Activated CD4-positive, alpha-beta T cell treated with anti-CD3 and anti-CD28 coated beads for 36 hours (primary cell): ENCODE measurements at regions of chr19 and their contacts with region 1.

Region 1: DNA sequence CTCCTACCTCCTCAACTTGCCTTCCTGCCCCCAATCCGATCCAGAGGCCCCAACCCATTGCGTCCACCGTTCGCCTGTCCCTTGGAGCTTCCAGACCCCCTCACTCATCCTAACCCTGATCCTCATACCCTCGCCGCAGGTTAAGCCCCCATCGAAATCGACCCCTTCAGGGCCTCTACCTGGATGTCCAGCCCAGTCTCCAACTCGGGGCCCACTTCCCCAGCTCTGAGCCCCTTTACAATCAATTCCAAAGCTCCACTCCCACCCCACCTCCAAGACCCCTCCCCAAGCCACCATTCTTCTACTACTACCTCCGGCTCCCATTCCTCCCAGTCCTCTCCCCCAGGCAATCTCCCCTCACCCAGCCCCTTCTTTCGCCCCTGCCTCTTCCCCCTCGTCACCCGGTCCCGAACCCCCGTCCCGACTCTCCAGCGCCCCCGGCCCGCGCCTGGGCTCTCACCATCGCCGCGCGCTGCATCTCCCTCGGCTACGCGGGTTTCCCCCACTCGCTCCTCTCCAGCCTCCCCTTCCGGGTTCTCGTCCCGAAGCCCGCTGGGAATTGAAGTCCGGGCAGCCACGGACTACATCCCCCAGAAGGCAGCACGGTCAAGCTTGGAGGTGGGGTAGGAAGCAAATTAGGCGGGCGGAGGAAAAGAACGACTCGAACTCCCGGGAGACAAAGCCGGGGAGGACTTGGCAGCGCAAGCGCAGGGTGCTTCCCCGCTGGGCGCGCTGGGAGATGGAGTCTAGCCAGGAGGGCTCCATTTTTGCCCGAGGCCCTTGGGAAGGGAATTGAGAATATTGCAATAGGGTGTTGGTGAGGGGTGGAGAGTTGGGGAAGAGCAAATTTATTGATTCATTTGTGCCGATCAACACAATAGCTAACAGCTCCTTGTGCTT is at the start of gene FBXO46:
- DNase-seq: peak; percentile 97
- ATAC-seq: peak; percentile 99
- H3K4me3 Mint-ChIP-seq: peak within 1 kb of the TSS; percentile 88
- H3K27ac Mint-ChIP-seq: peak within 1 kb of the TSS; percentile 90
- H3K4me1 Mint-ChIP-seq: peaks cover 35% of the 10 kb centered on the region
- H3K27me3 Mint-ChIP-seq: no peaks in the 10 kb centered on the region
- total RNA-seq, gene FBXO46: 32.3 to 43.3 TPM

Region 2: GRCh38 chr19:45506246-45506990 is 224.2 kb before region 1 on chr19:
- CTCF ChIA-PET with region 1: no interaction called
- POLR2A ChIA-PET with region 1: no interaction called
- intact Hi-C with region 1: no loop called
- DNase-seq: peak; percentile 100
- ATAC-seq: peak; percentile 80
- H3K4me3 Mint-ChIP-seq: peak overlapping the region; percentile 85
- H3K27ac Mint-ChIP-seq: peak overlapping the region; percentile 96
- H3K4me1 Mint-ChIP-seq: peaks cover 38% of the 10 kb centered on the region
- H3K27me3 Mint-ChIP-seq: no peaks in the 10 kb centered on the region

Region 3: GRCh38 chr19:45717166-45717982 is 13.3 kb before region 1 on chr19:
- CTCF ChIA-PET with region 1: interaction called, 24 read pairs
- POLR2A ChIA-PET with region 1: interaction called, 6 read pairs
- intact Hi-C with region 1: loop called (anchors 1 kb)
- DNase-seq: peak; percentile 99
- ATAC-seq: peak; percentile 97
- H3K4me3 Mint-ChIP-seq: peak overlapping the region; percentile 93
- H3K27ac Mint-ChIP-seq: peak overlapping the region; percentile 94
- H3K4me1 Mint-ChIP-seq: peaks cover 40% of the 10 kb centered on the region
- H3K27me3 Mint-ChIP-seq: no peaks in the 10 kb centered on the region

Region 4: DNA sequence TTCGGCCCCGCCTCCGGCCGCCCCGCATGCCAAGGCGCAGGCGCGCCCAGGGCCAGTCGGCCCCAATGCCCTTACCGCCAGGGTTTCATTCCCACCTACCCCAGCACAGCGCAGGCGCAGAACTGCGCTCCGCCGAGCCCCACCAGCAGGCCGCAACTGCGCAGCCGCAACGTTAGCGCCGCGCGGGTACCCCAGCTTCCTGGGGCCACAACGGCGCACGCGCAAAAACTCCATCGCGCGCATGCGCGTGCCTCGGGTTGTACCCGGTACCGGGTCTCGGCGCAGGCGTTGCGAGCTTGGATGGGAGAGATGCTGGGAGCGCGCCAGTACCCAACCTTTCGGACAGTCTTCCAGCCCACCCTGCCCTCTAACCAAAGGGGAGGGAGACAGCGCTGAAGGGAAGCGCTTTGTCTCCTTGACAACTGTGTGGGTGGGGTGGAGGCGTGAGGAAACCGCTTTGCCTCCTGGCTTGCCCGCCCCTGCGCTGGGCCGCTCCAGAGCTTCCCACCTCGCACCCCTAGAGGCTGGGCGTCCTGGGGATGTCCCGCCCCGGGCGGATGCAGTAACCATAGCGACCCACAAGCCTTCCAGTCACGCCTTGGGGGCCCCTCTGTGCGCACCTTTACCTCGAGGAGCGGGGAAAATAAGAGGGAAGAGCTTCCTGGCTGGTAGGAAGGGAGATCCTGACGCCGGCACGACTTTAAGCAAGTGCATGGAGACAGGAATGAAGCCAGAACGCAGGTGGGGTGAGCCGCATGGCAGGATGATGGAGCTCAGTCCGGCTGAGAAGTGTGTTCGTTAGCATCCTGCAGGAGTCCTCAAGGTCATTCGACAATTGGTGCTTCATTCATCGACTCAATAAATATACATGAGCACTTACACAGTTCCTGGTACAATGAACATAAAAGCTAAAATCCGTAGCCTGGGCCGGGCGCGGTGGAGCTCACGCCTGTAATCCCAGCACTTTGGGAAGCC is 172.3 kb after region 1 on chr19:
- CTCF ChIA-PET with region 1: no interaction called
- POLR2A ChIA-PET with region 1: no interaction called
- intact Hi-C with region 1: loop called in 1 of 2 experiments (anchors 2 kb)
- DNase-seq: peak; percentile 100
- ATAC-seq: peak; percentile 88
- H3K4me3 Mint-ChIP-seq: peak overlapping the region; percentile 88
- H3K27ac Mint-ChIP-seq: peak overlapping the region; percentile 75
- H3K4me1 Mint-ChIP-seq: peaks cover 16% of the 10 kb centered on the region
- H3K27me3 Mint-ChIP-seq: no peaks in the 10 kb centered on the region

Region 5: DNA sequence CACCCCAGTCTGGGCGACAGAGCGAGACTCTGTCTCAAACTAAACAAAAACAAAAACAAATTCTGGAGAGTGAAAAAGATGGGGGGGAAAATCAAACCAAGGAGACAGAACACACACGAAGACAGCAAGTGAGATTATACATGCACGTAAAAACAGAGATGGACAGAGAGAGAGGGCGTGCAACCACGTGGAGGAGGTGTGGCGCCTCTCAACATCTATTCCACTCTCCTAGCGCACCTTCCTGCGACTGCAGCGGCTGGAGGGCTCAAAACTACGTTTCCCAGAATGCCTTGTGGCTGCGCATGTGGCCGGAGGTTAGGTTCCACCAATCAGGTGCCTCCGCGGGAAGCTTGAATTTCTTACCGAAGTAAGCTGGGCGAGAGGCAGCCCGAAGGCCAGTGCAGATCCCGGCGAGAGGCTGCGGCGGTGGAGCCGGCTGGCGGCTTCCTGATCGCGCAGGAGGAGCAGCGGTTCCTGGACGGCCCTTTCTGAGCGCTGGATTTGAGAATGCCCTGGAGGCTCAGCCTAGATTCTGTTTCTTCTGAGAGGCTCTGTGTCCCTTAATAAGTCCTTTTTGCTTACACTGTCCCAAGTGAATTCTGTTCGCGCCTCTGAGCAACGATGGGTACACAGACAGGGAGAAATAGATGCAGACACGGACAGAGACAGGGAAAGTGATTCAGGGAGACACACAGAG is 197.1 kb after region 1 on chr19:
- CTCF ChIA-PET with region 1: no interaction called
- POLR2A ChIA-PET with region 1: no interaction called
- intact Hi-C with region 1: loop called in 1 of 2 experiments (anchors 1 kb)
- DNase-seq: peak; percentile 96
- ATAC-seq: peak; percentile 100
- H3K4me3 Mint-ChIP-seq: peak overlapping the region; percentile 56
- H3K27ac Mint-ChIP-seq: peak overlapping the region; percentile 68
- H3K4me1 Mint-ChIP-seq: peaks cover 12% of the 10 kb centered on the region
- H3K27me3 Mint-ChIP-seq: peaks cover 7% of the 10 kb centered on the region